H1 (cell line): ENCODE measurements at regions of chr4 and their contacts with region 1.

Region 1: DNA sequence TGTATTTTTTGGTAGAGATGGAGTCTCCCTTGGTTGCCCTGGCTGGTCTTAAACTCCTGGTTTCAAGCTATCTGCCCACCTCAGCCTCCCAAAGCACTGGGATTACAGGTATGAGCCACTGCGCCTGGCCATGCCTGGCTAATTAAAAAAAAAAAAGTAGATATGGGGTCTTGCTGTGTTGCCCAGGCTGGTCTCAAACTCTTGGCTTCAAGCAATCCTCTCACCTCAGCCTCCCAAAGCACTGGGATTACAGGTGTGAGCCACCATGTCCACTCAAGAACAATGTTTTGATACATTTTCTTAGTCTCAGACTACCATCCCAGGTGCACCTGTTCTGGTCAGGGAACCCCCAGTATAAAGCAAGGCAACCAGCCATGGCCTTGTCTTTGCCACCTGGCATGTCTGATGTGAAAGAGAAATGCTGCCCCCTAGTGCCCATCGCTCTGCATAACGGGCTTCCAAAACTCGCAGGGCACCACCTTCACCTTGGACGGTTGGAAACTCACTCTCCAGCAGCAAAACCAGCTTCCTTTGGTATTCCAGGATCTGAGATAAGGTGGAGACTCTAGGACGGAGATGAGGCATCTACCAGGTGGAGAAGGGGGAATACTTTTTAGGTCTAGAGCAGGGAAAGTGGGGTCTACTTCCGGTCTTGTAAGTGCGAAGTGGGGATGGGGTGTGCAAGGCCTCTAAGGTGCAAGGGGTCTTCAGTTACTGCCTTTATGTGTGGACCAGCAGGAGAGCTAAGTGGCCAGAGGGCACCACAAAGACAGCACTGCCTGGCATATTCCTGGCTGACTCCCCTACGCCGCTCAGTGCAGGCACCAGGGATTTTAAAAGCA is 47.7 kb upstream of the AFAP1 start:
- DNase-seq: peak in 1 of 2 experiments; percentile 95
- H3K4me3 ChIP-seq: no peak overlapping the region
- H3K27ac ChIP-seq: no peak overlapping the region
- H3K4me1 ChIP-seq: peaks cover 0 to 6% (median 2%) of the 10 kb centered on the region in 4 experiments; a peak in 1 of 7 replicates
- H3K27me3 ChIP-seq: no peaks in the 10 kb centered on the region
- CTCF ChIP-seq: peak in 2 of 3 experiments; percentile 93 to 98; a peak in 3 of 4 replicates
- EP300 ChIP-seq: no peak
- POLR2A ChIP-seq: no peak
- RAD21 ChIP-seq: peak; percentile 99

Region 2: GRCh38 chr4:7761720-7762119 is 225.6 kb before region 1 on chr4:
- CTCF ChIA-PET with region 1: interaction called, 35 read pairs
- POLR2A ChIA-PET with region 1: no interaction called
- DNase-seq: peak; percentile 17 to 83
- H3K4me3 ChIP-seq: no peak overlapping the region
- H3K27ac ChIP-seq: no peak overlapping the region
- H3K4me1 ChIP-seq: no peaks in the 10 kb centered on the region
- H3K27me3 ChIP-seq: no peaks in the 10 kb centered on the region
- CTCF ChIP-seq: peak in 2 of 3 experiments; percentile 76 to 83; a peak in 3 of 4 replicates
- EP300 ChIP-seq: no peak
- POLR2A ChIP-seq: no peak
- RAD21 ChIP-seq: peak; percentile 71 to 74

Region 3: GRCh38 chr4:7811536-7812191 is 175.7 kb before region 1 on chr4:
- CTCF ChIA-PET with region 1: interaction called, 180 read pairs
- POLR2A ChIA-PET with region 1: interaction called, 4 read pairs
- DNase-seq: no peak
- H3K4me3 ChIP-seq: no peak overlapping the region
- H3K27ac ChIP-seq: no peak overlapping the region
- H3K4me1 ChIP-seq: peaks cover 2 to 19% (median 11%) of the 10 kb centered on the region in 4 experiments
- H3K27me3 ChIP-seq: no peaks in the 10 kb centered on the region
- CTCF ChIP-seq: no peak
- EP300 ChIP-seq: no peak
- POLR2A ChIP-seq: no peak
- RAD21 ChIP-seq: no peak

Region 4: DNA sequence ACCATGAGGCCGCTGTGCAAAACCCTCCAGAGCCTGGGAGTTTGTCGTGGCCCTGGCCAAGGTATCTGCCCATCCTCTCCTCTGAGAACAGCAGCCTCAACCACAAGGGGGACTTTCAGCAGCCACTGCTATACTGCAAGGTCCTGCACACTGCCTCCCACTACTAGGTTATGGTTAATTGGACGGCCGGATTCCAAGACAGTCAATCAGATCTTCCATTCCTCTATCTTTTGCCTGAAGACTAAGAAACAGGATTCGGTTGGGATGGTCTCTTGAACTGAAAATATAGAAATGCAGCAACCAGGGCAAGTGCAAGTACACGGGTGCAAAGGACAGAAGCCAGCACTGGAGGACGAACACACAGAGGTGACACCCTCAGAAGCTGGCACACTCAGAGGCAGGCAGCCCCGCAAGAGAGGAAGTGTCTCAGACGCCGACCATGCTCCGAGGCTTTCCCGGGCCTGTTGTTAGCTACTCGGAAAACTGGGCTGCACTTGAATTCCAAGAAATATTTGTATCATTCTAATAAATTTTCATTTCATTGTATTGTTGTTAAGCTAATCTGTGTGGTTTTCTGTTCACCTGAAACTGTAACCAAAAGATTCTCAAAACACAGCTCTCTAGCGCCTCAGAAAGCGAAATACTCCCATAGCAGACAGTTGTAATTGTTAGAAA is 111.0 kb before region 1 on chr4:
- CTCF ChIA-PET with region 1: interaction called, 29 read pairs
- POLR2A ChIA-PET with region 1: no interaction called
- DNase-seq: no peak
- H3K4me3 ChIP-seq: no peak overlapping the region
- H3K27ac ChIP-seq: no peak overlapping the region
- H3K4me1 ChIP-seq: peaks cover 0 to 3% (median 0%) of the 10 kb centered on the region in 4 experiments; a peak in 1 of 7 replicates
- H3K27me3 ChIP-seq: no peaks in the 10 kb centered on the region
- CTCF ChIP-seq: peak; percentile 39 to 62 (median 42); a peak in 3 of 4 replicates
- EP300 ChIP-seq: no peak
- POLR2A ChIP-seq: no peak
- RAD21 ChIP-seq: peak; percentile 34 to 58; a peak in 3 of 4 replicates

Region 5: GRCh38 chr4:7939377-7940108 is 47.8 kb before region 1 on chr4 and contains the start of gene AFAP1:
- CTCF ChIA-PET with region 1: interaction called, 38 read pairs
- POLR2A ChIA-PET with region 1: interaction called, 3 read pairs
- DNase-seq: peak in 1 of 2 experiments; percentile 97
- H3K4me3 ChIP-seq: peak within 1 kb of the TSS; percentile 36 to 85 (median 54)
- H3K27ac ChIP-seq: no peak within 1 kb of the TSS
- H3K4me1 ChIP-seq: peaks cover 8 to 24% (median 12%) of the 10 kb centered on the region in 4 experiments; a peak in 6 of 7 replicates
- H3K27me3 ChIP-seq: no peaks in the 10 kb centered on the region
- CTCF ChIP-seq: no peak
- EP300 ChIP-seq: no peak
- POLR2A ChIP-seq: 0 out of 3 replicates have a peak, but pooled peaks of 1 of the 2 experiments have one; percentile 26
- RAD21 ChIP-seq: peak in 1 of 2 experiments; percentile 23; a peak in 1 of 4 replicates
- total RNA-seq, gene AFAP1: 16.2 and 18.2 TPM in 2 replicates

Region 6: GRCh38 chr4:7967501-7968261 is 19.7 kb before region 1 on chr4:
- CTCF ChIA-PET with region 1: interaction called, 28 read pairs
- POLR2A ChIA-PET with region 1: interaction called, 4 read pairs
- DNase-seq: no peak
- H3K4me3 ChIP-seq: no peak overlapping the region
- H3K27ac ChIP-seq: no peak overlapping the region
- H3K4me1 ChIP-seq: peaks cover 0 to 17% (median 2%) of the 10 kb centered on the region in 4 experiments; a peak in 6 of 7 replicates
- H3K27me3 ChIP-seq: no peaks in the 10 kb centered on the region; a peak in 1 of 7 replicates
- CTCF ChIP-seq: no peak
- EP300 ChIP-seq: no peak
- POLR2A ChIP-seq: no peak
- RAD21 ChIP-seq: no peak

Region 7: DNA sequence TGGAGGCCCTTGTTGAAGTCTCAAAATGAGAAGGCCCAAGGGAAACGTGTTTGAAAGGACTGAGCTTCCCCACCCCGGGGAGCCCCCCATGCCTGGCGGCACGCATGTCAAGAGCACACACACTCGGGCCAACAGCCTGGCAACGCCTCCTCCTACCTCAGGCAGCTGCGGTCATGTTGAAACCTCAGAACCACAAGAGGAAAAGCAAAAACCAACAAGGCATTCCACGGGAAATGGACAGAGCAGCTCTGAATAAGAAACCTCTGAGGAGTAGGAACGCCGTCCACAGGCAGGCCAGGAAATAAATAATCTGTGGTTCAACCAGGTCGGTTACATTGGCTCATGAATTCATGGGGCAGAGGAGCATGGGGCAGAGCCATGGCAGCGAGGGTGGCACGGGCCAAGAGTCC is 48.0 kb after region 1 on chr4:
- CTCF ChIA-PET with region 1: no interaction called
- POLR2A ChIA-PET with region 1: no interaction called
- DNase-seq: no peak
- H3K4me3 ChIP-seq: no peak overlapping the region
- H3K27ac ChIP-seq: no peak overlapping the region
- H3K4me1 ChIP-seq: peaks cover 0 to 7% (median 1%) of the 10 kb centered on the region in 4 experiments; a peak in 2 of 7 replicates
- H3K27me3 ChIP-seq: no peaks in the 10 kb centered on the region
- CTCF ChIP-seq: no peak
- EP300 ChIP-seq: no peak
- POLR2A ChIP-seq: no peak
- RAD21 ChIP-seq: no peak